ENCODE measurements at regions of chrX and their contacts with region 1.

Region 1: DNA sequence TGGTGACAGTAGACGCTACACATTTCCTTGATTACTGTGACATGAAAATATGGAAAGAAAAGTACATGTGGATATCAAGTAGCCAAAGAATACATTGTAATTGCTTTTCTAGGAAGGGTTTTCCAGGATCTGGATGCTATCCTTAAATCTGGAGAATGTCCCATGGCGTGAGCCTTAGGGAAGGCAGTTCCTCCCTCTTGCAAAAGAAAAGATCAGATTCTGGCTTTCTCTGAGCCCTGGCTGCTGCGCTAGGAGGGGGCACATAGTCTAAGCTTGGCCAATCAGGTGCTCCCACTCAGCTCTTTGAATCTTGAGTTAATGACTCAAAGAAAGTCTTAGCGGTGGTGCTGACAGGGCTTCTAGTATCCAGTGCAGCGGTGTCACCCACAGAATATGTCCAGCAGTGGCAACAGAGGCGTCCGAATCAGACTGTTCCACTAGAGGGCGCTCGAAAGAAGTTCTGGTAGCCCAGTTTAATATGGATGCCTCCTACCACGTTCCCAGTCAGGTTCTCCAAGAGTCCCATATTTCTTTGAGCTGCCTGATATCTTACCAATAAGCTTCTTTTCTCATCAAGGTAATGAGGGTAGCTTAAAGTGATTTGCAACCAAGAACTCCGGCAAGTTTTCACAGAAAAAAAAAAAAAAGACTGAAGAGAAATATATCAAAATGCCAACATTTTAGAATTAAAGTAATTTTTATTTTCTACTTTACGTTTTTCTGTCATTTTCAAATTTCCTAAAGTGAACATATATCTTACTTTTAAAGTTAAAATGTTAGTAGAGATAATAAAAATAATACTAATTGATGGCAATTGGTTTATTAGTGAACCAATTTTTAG is 213.4 kb upstream of the S100G start:
- DNase-seq: peak; percentile 84
- H3K4me3 Mint-ChIP-seq: no peak overlapping the region
- H3K27ac Mint-ChIP-seq: no peak overlapping the region
- H3K4me1 Mint-ChIP-seq: peaks cover 11% of the 10 kb centered on the region
- H3K27me3 Mint-ChIP-seq: no peaks in the 10 kb centered on the region

Region 2: DNA sequence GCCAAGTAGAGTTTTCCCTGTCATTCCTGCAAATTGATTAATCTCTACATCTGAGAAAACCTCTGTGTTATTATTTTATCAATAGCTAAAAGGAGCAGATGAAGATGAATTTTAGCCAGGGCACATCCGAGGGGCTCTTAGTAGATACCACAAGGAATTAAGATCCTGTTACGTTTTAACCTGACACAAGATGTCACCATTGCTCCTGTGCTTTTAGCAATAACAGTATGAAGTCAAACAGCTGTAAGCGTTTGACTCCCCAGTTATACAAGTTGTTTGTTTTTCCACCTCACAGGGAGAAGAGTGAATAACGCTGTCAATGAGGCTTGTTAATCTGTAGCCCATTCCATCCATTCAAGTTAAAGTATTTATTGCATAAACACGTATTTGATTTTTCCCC is 506.0 kb before region 1 on chrX:
- CTCF ChIA-PET with region 1: no interaction called
- intact Hi-C with region 1: loop called (anchors 10 kb)
- DNase-seq: no peak
- H3K4me3 Mint-ChIP-seq: no peak overlapping the region
- H3K27ac Mint-ChIP-seq: no peak overlapping the region
- H3K4me1 Mint-ChIP-seq: no peaks in the 10 kb centered on the region
- H3K27me3 Mint-ChIP-seq: peaks cover 13% of the 10 kb centered on the region

Region 3: GRCh38 chrX:16589214-16589613 is 152.6 kb after region 1 on chrX:
- CTCF ChIA-PET with region 1: no interaction called
- intact Hi-C with region 1: no loop called
- DNase-seq: no peak
- H3K4me3 Mint-ChIP-seq: no peak overlapping the region
- H3K27ac Mint-ChIP-seq: no peak overlapping the region
- H3K4me1 Mint-ChIP-seq: peaks cover 11% of the 10 kb centered on the region
- H3K27me3 Mint-ChIP-seq: no peaks in the 10 kb centered on the region

Region 4: GRCh38 chrX:16670998-16671397 is 234.4 kb after region 1 on chrX:
- CTCF ChIA-PET with region 1: interaction called, 5 read pairs
- intact Hi-C with region 1: loop called (anchors 1 kb)
- DNase-seq: peak; percentile 45
- H3K4me3 Mint-ChIP-seq: no peak overlapping the region
- H3K27ac Mint-ChIP-seq: no peak overlapping the region
- H3K4me1 Mint-ChIP-seq: no peaks in the 10 kb centered on the region
- H3K27me3 Mint-ChIP-seq: no peaks in the 10 kb centered on the region

Region 5: DNA sequence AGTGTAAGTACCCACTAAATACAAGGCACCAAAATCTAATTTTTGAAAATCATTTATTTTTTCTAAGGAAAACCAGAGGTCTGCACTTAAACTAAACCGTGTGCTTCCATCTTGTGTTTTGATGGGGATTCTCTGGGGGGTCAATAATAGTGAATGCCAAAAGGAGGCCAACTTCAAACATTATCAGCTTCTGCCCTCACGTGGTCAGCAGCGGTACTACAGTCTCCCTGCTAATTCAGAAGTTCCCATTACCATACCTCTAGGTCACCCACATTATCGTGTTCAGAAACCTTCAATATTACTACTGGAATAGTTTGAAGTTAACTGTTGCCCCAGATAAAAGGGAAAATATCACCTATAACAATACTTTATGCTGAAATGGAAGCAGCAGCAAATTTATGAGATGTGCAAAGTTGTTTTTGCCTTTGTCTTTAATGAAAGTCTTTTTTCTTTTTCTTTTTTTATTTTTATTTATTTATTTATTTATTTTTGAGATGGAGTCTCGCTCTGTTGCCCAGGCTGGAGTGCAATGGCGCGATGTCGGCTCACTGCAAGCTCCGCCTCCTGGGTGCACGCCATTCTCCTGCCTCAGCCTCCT is 258.6 kb after region 1 on chrX:
- CTCF ChIA-PET with region 1: interaction called, 5 read pairs
- intact Hi-C with region 1: loop called (anchors 1 kb)
- DNase-seq: peak; percentile 74
- H3K4me3 Mint-ChIP-seq: no peak overlapping the region
- H3K27ac Mint-ChIP-seq: no peak overlapping the region
- H3K4me1 Mint-ChIP-seq: no peaks in the 10 kb centered on the region
- H3K27me3 Mint-ChIP-seq: no peaks in the 10 kb centered on the region